AG04449 (cell line): ENCODE measurements at regions of chr7 and their contacts with region 1.

Region 1: DNA sequence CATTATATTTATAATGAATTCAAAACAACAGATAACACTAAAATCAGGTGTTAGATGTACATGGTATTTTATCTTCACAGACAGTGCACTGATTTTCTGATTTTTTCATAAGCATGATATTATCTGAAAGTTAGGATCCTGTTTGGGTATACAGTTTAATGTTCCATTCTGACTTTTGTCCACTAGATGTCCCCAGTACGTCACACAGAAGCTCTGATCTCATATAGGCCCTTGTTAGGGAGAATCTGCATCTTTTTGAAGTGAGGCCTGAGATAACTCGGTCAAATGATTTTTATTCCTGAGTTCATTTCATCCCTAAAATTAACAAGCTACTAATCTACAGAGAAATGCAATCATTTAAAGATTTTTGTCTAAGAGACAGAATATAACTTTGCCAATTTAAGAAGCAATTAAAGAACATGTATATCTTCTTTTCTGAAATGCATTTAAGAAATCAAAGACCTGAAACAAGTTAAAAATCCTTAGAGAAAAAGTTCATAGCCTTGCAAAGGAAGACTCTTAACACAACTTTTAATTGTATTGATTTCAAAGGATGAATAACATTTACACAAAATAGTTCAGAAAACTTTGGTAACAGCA is 72.0 kb upstream of the TES start:
- DNase-seq: peak; percentile 23
- H3K4me3 ChIP-seq: no peak overlapping the region
- CTCF ChIP-seq: peak; percentile 64

Region 2: GRCh38 chr7:115582956-115583355 is 555.3 kb before region 1 on chr7:
- CTCF ChIA-PET with region 1: no interaction called
- POLR2A ChIA-PET with region 1: no interaction called
- DNase-seq: no peak
- H3K4me3 ChIP-seq: no peak overlapping the region
- CTCF ChIP-seq: no peak

Region 3: GRCh38 chr7:116018731-116019130 is 119.6 kb before region 1 on chr7:
- CTCF ChIA-PET with region 1: no interaction called
- POLR2A ChIA-PET with region 1: no interaction called
- DNase-seq: no peak
- H3K4me3 ChIP-seq: no peak overlapping the region
- CTCF ChIP-seq: no peak

Region 4: GRCh38 chr7:116150588-116150987 is 12.3 kb after region 1 on chr7:
- CTCF ChIA-PET with region 1: interaction called, 10 read pairs
- POLR2A ChIA-PET with region 1: no interaction called
- DNase-seq: no peak
- H3K4me3 ChIP-seq: no peak overlapping the region
- CTCF ChIP-seq: no peak

Region 5: GRCh38 chr7:116165717-116166116 is 27.4 kb after region 1 on chr7:
- CTCF ChIA-PET with region 1: interaction called, 23 read pairs
- POLR2A ChIA-PET with region 1: no interaction called
- DNase-seq: no peak
- H3K4me3 ChIP-seq: no peak overlapping the region
- CTCF ChIP-seq: no peak

Region 6: DNA sequence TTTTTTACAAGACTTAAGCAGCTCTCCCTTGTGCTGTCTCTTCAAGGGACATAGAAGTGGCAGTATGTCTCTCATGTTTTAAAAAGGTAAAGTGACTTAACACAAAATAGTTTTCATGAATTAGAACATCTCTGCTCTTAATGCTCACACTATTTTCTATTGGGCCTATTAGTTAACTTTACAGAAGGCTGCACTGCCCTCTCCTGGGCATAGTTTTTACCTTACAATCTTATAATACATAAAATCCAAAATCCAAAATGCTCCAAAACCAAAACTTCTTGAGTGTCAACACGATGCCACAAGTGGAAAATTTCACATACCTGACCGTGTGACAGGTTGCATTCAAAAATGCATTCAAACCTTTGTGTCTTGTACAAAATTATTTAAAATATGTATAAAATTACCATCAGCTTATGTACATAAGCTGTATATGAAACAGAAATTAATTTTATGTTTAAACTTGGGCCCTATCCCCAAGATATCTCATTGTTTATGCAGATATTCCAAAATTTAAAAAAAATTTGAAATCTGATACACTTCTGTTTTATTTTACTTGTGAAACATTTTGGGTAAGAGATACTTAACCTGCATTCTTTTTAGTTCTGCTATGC is 97.8 kb after region 1 on chr7:
- CTCF ChIA-PET with region 1: interaction called, 36 read pairs
- POLR2A ChIA-PET with region 1: interaction called, 3 read pairs
- DNase-seq: no peak
- H3K4me3 ChIP-seq: no peak overlapping the region
- CTCF ChIP-seq: peak; percentile 8

Region 7: GRCh38 chr7:116249708-116250553 is 111.6 kb after region 1 on chr7:
- CTCF ChIA-PET with region 1: interaction called, 15 read pairs
- POLR2A ChIA-PET with region 1: no interaction called
- DNase-seq: no peak
- H3K4me3 ChIP-seq: no peak overlapping the region
- CTCF ChIP-seq: peak; percentile 58